Ovary (tissue), 10 donors: ENCODE measurements at regions of chr15 and their contacts with region 1.

Region 1: DNA sequence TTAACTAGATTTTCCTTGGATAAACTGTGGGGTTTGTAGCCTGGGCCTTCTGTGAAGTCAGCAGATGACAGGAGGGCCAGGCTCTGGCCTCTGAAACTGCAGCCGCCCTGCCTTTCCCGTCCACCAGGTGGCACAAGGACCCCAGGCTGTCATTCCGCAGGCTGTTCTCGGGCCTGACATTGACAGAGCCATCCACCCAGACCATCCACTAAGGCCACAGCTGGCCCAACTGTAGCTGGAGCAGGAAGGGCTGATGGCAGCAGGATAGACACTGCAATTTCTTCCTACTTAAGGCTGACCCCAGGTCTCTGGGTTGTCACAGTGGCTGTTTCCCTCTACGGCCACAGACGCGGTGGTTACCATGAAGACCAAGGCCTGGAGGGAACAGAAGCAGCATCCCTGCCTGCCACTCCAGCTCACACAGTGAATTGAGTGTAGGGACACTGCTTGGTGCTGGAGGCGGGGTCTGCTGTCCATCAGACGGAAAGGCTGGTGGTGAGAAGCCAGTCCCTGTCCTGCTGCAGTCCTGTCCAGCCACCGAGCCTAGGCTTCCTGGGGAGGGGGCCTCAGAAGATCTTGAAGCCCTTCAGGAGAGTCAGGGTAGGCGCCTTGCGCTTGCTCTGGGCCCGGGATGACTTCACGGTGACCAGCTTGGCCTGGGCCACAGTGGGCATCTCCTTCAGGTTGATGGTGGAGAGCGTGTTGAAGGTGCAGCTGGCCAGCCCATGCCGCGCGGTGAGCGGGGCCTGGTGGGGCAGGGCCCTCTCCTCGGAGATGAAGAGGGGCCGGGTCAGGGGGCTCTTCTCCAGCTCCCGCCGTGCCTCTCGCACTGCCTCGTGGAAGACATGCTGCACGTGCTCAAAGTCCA is 9.4 kb downstream of the SLC51B start:
- DNase-seq: peak; percentile 66 to 85 (median 77)
- H3K4me3 ChIP-seq: no peak overlapping the region
- H3K27ac ChIP-seq: no peak overlapping the region
- H3K4me1 ChIP-seq: no peaks in the 10 kb centered on the region
- H3K27me3 ChIP-seq: no peaks in the 10 kb centered on the region
- CTCF ChIP-seq: peak; percentile 85 to 89 (median 89)
- EP300 ChIP-seq: no peak
- POLR2A ChIP-seq: peak; percentile 32

Region 2: DNA sequence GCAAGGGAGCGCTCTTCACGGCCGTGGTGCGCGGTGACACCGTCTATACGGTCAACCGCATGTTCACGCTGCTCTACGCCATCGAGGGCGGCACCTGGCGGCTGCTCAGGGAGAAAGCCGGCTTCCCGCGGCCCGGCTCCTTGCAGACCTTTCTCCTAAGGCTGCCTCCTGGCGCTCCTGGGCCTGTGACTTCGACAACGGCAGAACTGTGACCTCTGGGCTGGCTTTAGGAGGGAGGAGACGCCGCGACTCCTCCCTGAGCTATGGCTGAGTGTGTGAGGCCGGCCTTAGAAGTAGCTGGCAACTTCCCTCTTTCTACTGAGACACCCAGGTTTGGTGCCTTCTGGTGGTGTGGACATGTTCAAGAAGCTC is 23.4 kb after region 1 on chr15:
- intact Hi-C with region 1: loop called in 3 of 4 experiments (anchors 2 kb)
- DNase-seq: peak; percentile 66 to 86 (median 77)
- H3K4me3 ChIP-seq: no peak overlapping the region
- H3K27ac ChIP-seq: no peak overlapping the region
- H3K4me1 ChIP-seq: peaks cover 2% of the 10 kb centered on the region
- H3K27me3 ChIP-seq: no peaks in the 10 kb centered on the region
- CTCF ChIP-seq: peak; percentile 35 to 70 (median 56)
- EP300 ChIP-seq: no peak
- POLR2A ChIP-seq: no peak

Region 3: DNA sequence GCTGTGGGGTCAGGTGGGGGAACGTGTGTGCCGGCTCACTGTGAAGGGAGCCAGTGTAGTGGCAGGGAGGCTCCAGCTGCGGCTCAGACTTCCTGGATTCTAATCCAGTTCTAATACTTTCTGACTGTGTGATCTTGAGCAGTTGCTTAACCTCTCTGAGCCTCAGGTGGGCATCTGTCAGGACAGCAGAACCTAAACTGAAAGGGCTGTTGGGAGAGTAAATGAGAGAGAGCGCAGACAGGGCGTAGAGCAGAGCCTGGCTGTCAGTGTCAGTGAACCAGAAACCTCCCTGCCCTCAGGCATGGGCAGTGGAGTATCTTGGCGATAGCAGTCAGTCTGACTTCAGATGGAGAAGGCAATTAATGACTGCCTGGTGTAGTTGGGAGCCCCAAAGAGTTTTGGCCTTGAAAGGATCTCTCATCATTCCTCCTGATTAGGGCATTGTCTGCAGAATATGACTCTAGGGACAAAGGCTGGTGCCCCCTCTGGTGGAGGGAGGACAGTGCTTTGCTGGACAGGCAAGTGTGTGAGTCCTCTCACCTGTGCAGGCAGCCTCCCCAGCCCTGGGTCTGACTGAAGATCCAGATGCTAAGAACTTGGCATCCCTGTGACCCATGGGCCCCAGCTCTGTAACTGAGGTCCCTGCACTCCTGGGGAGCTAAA is 31.6 kb after region 1 on chr15:
- intact Hi-C with region 1: loop called in 2 of 4 experiments (anchors 2 to 5 kb)
- DNase-seq: no peak
- H3K4me3 ChIP-seq: no peak overlapping the region
- H3K27ac ChIP-seq: no peak overlapping the region
- H3K4me1 ChIP-seq: peaks cover 14% of the 10 kb centered on the region
- H3K27me3 ChIP-seq: no peaks in the 10 kb centered on the region
- CTCF ChIP-seq: no peak
- EP300 ChIP-seq: no peak
- POLR2A ChIP-seq: no peak

Region 4: GRCh38 chr15:65275728-65276126 is 221.2 kb after region 1 on chr15:
- intact Hi-C with region 1: loop called in 1 of 4 experiments (anchors 10 kb)
- DNase-seq: no peak
- H3K4me3 ChIP-seq: no peak overlapping the region
- H3K27ac ChIP-seq: no peak overlapping the region
- H3K4me1 ChIP-seq: no peaks in the 10 kb centered on the region
- H3K27me3 ChIP-seq: no peaks in the 10 kb centered on the region
- CTCF ChIP-seq: no peak
- EP300 ChIP-seq: no peak
- POLR2A ChIP-seq: no peak